ENCODE measurements at regions of chr10 and their contacts with region 1.

Region 1: GRCh38 chr10:84147347-84147746 is 8.0 kb downstream of the GHITM start:
- DNase-seq: no peak
- H3K4me3 ChIP-seq: no peak overlapping the region
- H3K27ac ChIP-seq: no peak overlapping the region
- H3K4me1 ChIP-seq: no peaks in the 10 kb centered on the region
- H3K27me3 ChIP-seq: no peaks in the 10 kb centered on the region
- CTCF ChIP-seq: no peak
- POLR2A ChIP-seq: no peak

Region 2: DNA sequence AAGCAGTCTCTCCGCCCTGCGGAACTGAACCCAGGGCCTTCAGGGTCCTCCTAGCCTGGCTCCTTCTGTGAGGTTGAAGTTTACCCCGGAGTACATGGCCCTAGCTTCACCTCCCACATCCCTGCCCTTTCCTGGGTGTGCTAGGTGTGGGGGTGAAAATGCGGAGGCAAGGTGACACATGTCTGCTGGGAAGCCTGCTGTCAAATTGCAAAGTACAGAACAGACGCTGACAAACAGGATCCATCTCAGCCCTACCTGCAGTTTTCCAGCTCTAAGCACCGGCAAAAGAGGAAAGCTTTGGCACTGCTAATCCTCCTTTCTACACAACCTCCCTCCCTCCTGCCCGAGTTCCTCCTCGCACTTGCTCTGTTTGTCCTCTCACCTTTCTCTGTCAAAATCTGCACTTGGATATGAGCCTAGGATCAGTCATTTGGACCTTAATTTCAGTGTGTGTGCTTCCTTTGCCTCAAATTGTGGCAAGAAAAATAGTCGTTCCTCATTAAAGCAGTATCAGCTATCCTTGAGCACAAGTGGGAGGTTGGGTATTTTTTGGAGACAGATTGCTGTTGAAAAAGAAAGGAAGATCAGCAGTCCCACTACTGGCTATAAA is 11.8 kb after region 1 on chr10:
- CTCF ChIA-PET with region 1: interaction called, 14 read pairs
- POLR2A ChIA-PET with region 1: no interaction called
- dilution Hi-C with region 1: no loop called
- intact Hi-C with region 1: no loop called
- DNase-seq: no peak
- H3K4me3 ChIP-seq: no peak overlapping the region
- H3K27ac ChIP-seq: no peak overlapping the region
- H3K4me1 ChIP-seq: no peaks in the 10 kb centered on the region
- H3K27me3 ChIP-seq: peaks cover 0 to 2% of the 10 kb centered on the region in 2 experiments
- CTCF ChIP-seq: no peak
- POLR2A ChIP-seq: no peak

Region 3: GRCh38 chr10:84184528-84184927 is 37.2 kb after region 1 on chr10:
- CTCF ChIA-PET with region 1: no interaction called
- POLR2A ChIA-PET with region 1: no interaction called
- dilution Hi-C with region 1: no loop called
- intact Hi-C with region 1: no loop called
- DNase-seq: no peak
- H3K4me3 ChIP-seq: no peak overlapping the region
- H3K27ac ChIP-seq: no peak overlapping the region
- H3K4me1 ChIP-seq: no peaks in the 10 kb centered on the region
- H3K27me3 ChIP-seq: no peaks in the 10 kb centered on the region
- CTCF ChIP-seq: no peak
- POLR2A ChIP-seq: no peak

Region 4: DNA sequence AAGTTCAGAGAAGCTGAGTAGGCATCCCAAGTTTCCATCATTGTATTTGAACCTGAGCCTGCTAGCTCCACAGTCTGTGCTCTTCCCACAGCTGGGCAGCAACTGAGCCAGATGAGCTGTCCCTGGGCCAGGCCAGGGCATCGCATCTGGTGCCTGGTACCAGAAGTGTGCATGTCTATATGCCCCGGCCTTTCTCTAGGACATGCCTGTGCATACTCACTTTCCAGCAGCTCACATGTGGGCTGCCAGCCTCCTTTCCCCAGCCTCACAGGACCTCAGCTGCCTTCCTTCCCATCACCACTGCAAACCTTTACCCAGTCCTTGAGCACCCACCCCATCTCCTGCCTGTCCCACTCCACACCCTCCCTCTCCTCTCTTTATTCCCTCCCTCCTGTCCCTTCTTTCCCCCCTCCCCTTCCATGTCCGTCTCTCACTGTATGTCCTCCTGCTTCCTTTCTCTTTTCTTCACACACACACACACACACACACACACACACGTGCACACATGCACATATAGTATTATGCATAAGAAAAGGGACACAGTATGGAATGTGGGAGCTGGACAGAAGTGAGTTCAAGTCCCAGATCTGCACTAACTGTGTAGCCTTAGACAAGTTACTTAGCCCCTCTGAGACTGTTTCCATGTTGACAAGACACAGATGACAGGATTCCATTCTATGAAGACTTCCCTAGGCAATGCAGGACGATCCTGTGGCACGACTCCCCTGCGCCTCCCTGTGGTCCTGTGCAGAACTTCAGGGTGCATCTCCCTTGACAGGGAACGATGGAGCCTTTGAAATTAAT is 57.9 kb after region 1 on chr10:
- CTCF ChIA-PET with region 1: interaction called, 8 read pairs
- POLR2A ChIA-PET with region 1: no interaction called
- dilution Hi-C with region 1: no loop called
- intact Hi-C with region 1: loop called (anchors 2 kb)
- DNase-seq: peak; percentile 39
- H3K4me3 ChIP-seq: no peak overlapping the region
- H3K27ac ChIP-seq: no peak overlapping the region
- H3K4me1 ChIP-seq: no peaks in the 10 kb centered on the region
- H3K27me3 ChIP-seq: no peaks in the 10 kb centered on the region
- CTCF ChIP-seq: peak; percentile 71 to 83
- POLR2A ChIP-seq: no peak

Region 5: DNA sequence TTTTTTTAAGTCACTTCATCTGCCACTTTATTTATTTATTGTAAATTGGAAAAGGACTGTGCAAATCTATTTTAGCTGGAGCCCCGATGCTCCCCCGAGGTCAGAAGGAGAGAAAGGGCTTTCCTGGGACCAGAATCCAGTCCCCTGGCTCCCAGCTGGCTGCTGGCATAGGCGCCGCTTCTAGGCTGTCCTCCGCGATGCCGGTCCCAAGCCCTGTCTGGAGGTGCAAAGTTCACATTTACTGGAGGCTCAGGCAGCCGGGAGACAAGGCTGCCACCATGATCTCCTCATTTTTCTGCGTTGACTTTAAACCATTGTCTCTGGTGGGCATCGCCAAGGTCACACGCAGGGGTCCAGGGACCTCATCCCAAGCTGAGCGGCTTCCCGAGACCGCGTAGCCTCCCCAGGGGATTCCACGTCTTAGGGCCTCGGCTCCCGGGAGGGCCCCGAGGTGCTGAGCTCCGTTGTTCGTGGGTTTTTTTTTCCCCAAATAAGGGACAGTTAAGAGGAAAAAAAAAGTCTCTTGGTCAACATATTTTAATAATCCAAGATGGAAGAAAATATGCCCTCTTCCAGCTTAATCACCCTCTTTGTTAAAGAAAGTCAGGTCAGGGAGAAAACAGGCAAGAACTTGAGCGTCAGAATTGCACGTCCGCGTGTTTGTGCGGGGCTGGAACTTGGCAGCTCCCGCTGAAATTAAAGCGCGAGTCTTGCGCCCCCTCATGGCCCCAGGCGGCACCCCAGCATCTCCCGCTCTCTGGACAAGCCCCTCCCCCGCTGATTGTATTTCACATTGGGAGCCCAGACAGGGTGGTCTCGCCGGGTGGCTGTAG is 109.4 kb after region 1 on chr10:
- CTCF ChIA-PET with region 1: interaction called, 11 read pairs
- POLR2A ChIA-PET with region 1: no interaction called
- dilution Hi-C with region 1: no loop called
- intact Hi-C with region 1: no loop called
- DNase-seq: peak; percentile 46
- H3K4me3 ChIP-seq: no peak overlapping the region
- H3K27ac ChIP-seq: no peak overlapping the region
- H3K4me1 ChIP-seq: no peaks in the 10 kb centered on the region
- H3K27me3 ChIP-seq: peaks cover 4 to 7% of the 10 kb centered on the region in 2 experiments
- CTCF ChIP-seq: peak; percentile 69 to 84
- POLR2A ChIP-seq: no peak

Measured in endothelial cell of umbilical vein (primary cell).